HCT116 (cell line): ENCODE measurements at regions of chr3 and their contacts with region 1.

Region 1: GRCh38 chr3:177197041-177197727 is at the start of gene TBL1XR1:
- DNase-seq: peak; percentile 82
- ATAC-seq: peak; percentile 76
- H3K4me3 ChIP-seq: peak within 1 kb of the TSS; percentile 87 to 95
- H3K27ac ChIP-seq: peak within 1 kb of the TSS; percentile 86
- H3K4me1 ChIP-seq: peaks cover 25 to 42% of the 10 kb centered on the region in 2 experiments
- H3K27me3 ChIP-seq: no peaks in the 10 kb centered on the region
- CTCF ChIP-seq: no peak
- POLR2A ChIP-seq: no peak
- RAD21 ChIP-seq: peak; percentile 30
- total RNA-seq, gene TBL1XR1: 180 TPM

Region 2: GRCh38 chr3:177249203-177249602 is 52.0 kb after region 1 on chr3:
- CTCF ChIA-PET with region 1: no interaction called
- POLR2A ChIA-PET with region 1: no interaction called
- RAD21 ChIA-PET with region 1: no interaction called
- intact Hi-C with region 1: no loop called
- DNase-seq: no peak
- ATAC-seq: no peak
- H3K4me3 ChIP-seq: no peak overlapping the region
- H3K27ac ChIP-seq: no peak overlapping the region
- H3K4me1 ChIP-seq: no peaks in the 10 kb centered on the region
- H3K27me3 ChIP-seq: no peaks in the 10 kb centered on the region
- CTCF ChIP-seq: no peak
- POLR2A ChIP-seq: no peak
- RAD21 ChIP-seq: no peak

Region 3: DNA sequence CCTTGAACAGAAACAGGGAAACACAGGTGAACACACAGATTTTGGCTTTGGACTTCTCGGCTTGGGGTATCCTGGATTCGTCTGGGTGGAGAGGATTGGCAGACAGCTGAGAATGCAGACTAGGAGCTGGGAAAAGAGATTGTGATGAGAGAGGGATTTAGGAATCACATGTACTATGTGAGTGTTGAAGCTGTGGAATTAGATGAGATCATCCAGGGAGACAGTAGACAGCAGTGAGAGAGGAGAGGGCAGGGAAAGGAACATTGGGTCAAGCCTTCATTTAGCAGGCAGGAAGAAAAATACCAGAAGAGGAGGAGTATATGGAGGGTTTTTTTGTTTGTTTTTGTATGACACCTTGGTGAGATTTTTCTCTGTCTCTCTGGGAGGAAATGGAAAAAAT is 262.2 kb after region 1 on chr3:
- CTCF ChIA-PET with region 1: no interaction called
- POLR2A ChIA-PET with region 1: no interaction called
- RAD21 ChIA-PET with region 1: no interaction called
- intact Hi-C with region 1: no loop called
- DNase-seq: no peak
- ATAC-seq: no peak
- H3K4me3 ChIP-seq: no peak overlapping the region
- H3K27ac ChIP-seq: no peak overlapping the region
- H3K4me1 ChIP-seq: peaks cover 0 to 4% of the 10 kb centered on the region in 2 experiments; a peak in 1 of 4 replicates
- H3K27me3 ChIP-seq: no peaks in the 10 kb centered on the region
- CTCF ChIP-seq: no peak
- POLR2A ChIP-seq: no peak
- RAD21 ChIP-seq: no peak

Region 4: DNA sequence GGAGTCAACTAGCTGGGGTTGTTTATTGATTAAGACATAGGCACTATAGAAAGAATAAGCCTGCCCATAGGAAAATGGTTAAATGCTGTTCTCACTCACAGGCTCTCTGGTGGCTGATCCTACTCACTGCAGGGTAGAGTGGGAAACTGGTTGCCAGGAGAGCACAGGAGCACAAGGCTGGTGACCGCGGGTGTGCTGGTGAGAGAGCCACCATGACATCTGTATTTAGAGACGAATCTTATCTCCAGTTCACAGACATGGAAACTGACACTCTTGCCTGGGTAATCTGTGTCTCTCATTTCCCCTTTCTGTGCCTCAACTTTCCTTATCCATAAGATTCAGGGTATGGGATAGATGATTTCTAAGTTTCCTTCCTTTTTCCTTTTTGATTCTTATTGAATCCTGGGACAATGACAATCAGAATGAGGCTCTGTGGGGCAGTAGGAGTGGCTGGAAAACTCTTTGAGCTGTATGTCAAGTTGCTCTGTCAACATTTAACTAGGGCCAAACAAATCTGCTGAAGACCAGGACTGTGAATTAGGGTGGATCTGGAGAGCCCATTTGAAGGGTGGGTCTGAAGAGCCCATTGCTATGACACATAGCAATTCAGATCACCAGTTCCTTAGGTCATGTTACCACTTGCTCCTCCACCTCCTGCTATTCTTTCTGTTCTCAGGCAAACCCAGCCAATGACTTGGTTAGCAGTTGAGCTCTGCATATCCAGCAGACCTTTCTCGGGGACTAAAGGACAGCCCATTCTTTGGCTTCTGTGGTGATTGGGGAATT is 286.2 kb after region 1 on chr3:
- CTCF ChIA-PET with region 1: no interaction called
- POLR2A ChIA-PET with region 1: no interaction called
- RAD21 ChIA-PET with region 1: no interaction called
- intact Hi-C with region 1: loop called (anchors 10 kb)
- DNase-seq: peak; percentile 31
- ATAC-seq: peak; percentile 87
- H3K4me3 ChIP-seq: no peak overlapping the region
- H3K27ac ChIP-seq: no peak overlapping the region
- H3K4me1 ChIP-seq: peaks cover 14 to 17% of the 10 kb centered on the region in 2 experiments
- H3K27me3 ChIP-seq: no peaks in the 10 kb centered on the region
- CTCF ChIP-seq: peak in 2 of 3 experiments; percentile 61 to 64; a peak in 4 of 6 replicates
- POLR2A ChIP-seq: no peak
- RAD21 ChIP-seq: peak; percentile 54

Region 5: DNA sequence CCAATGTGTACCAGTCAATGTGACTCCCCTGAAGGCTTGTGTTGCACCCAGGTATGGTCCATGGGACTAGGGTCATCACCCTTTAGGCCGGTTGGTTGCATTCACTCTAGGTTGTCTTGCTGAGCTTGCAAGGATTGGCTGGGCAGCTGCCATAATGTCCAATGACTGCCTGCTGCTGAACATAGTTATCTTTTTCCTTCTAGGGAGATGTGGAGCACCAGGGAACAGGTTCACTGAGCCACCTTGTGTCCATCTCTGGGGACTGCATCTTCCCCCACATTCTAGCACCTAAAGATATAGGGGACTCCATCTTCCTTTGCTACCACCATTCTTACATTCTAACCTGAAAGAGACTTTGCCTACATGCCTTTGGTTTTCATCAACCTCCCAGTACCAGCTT is 580.5 kb after region 1 on chr3:
- CTCF ChIA-PET with region 1: no interaction called
- POLR2A ChIA-PET with region 1: no interaction called
- RAD21 ChIA-PET with region 1: no interaction called
- intact Hi-C with region 1: loop called (anchors 5 kb)
- DNase-seq: peak; percentile 51
- ATAC-seq: peak; percentile 95
- H3K4me3 ChIP-seq: no peak overlapping the region
- H3K27ac ChIP-seq: no peak overlapping the region
- H3K4me1 ChIP-seq: peaks cover 0 to 8% of the 10 kb centered on the region in 2 experiments; a peak in 1 of 4 replicates
- H3K27me3 ChIP-seq: no peaks in the 10 kb centered on the region
- CTCF ChIP-seq: peak; percentile 22 to 74 (median 69); a peak in 5 of 6 replicates
- POLR2A ChIP-seq: no peak
- RAD21 ChIP-seq: peak; percentile 81